ENCODE measurements at regions of chr12 and their contacts with region 1.

Region 1: GRCh38 chr12:107884769-107885694 is 110.5 kb downstream of the ASCL4 start:
- DNase-seq: peak; percentile 66
- H3K4me3 ChIP-seq: no peak overlapping the region
- H3K27ac ChIP-seq: no peak overlapping the region
- H3K4me1 ChIP-seq: no peaks in the 10 kb centered on the region
- H3K27me3 ChIP-seq: peaks cover 57% of the 10 kb centered on the region
- CTCF ChIP-seq: peak; percentile 81

Region 2: GRCh38 chr12:107545737-107546353 is 339.2 kb before region 1 on chr12:
- CTCF ChIA-PET with region 1: no interaction called
- POLR2A ChIA-PET with region 1: no interaction called
- intact Hi-C with region 1: no loop called
- DNase-seq: no peak
- H3K4me3 ChIP-seq: no peak overlapping the region
- H3K27ac ChIP-seq: no peak overlapping the region
- H3K4me1 ChIP-seq: no peaks in the 10 kb centered on the region
- H3K27me3 ChIP-seq: no peaks in the 10 kb centered on the region
- CTCF ChIP-seq: no peak

Region 3: GRCh38 chr12:107677671-107678070 is 207.4 kb before region 1 on chr12:
- CTCF ChIA-PET with region 1: interaction called, 10 read pairs
- POLR2A ChIA-PET with region 1: no interaction called
- intact Hi-C with region 1: loop called (anchors 2 kb)
- DNase-seq: no peak
- H3K4me3 ChIP-seq: no peak overlapping the region
- H3K27ac ChIP-seq: no peak overlapping the region
- H3K4me1 ChIP-seq: no peaks in the 10 kb centered on the region
- H3K27me3 ChIP-seq: peaks cover 5% of the 10 kb centered on the region
- CTCF ChIP-seq: no peak

Region 4: DNA sequence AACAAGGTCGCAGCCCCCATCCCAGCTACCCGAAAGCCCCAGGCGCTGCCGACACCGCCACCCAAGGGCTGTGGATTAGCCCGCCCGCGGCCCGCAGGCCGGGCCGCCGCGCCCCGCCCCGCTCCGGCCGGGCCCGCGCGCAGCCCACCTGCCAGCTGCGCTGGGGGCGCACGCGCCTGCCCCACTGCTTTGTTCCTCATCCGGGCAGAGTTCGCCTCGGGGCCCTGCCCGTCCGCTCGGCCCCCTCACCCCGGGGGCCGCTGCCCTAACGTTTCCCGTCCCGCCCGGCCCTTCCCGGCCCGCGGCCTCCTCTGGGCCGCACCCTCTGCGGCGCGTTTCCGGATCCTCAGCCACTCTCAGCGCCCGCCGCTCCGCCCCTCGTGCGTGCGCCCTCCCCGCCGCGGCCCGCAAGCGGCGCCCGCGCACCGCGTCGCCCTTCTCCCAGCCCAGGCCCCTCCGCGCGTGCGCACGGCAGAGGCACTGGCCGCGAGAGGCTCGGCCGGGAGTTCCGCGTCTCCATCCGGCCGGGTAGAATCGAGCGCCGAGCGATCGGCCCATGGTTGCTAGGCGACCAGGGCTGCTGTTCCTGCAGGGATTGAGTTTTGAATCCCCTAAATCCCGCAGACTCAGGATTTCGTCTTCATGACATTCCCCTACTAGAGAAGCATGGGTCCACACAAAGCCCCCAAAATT is 124.1 kb before region 1 on chr12 and contains the start of gene PRDM4:
- CTCF ChIA-PET with region 1: no interaction called
- POLR2A ChIA-PET with region 1: no interaction called
- intact Hi-C with region 1: loop called (anchors 2 kb)
- DNase-seq: peak; percentile 98
- H3K4me3 ChIP-seq: peak within 1 kb of the TSS; percentile 95
- H3K27ac ChIP-seq: peak within 1 kb of the TSS; percentile 56
- H3K4me1 ChIP-seq: peaks cover 16% of the 10 kb centered on the region
- H3K27me3 ChIP-seq: no peaks in the 10 kb centered on the region
- CTCF ChIP-seq: no peak; the same call in 1 of the 2 replicates
- total RNA-seq, gene PRDM4: 27.9 and 31.5 TPM in 2 replicates

Region 5: DNA sequence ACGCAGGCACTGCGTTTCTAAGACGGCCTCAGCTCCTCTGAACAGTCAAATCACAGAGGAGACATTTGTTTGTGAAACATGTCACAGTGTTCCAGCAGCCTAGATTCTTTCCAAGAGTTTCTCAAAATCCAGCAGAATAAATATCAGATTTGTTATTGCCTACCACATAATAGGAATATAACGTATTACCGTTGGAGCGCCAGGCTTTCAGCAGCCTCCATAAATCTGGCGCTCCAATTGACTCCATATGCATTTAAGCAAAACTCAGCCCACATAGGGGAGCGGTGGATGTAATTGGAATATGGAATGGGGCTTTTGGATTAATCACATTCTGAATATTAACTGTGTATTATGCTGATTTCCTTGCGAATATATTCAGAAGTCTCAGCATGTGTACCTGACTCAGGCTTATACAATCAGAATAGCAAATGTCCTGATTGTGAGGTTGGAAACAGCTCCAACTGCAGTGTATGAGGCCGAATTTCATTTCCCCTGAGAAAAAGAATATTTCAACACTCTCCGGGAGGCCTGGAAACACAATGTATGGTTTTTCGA is 63.4 kb after region 1 on chr12:
- CTCF ChIA-PET with region 1: no interaction called
- POLR2A ChIA-PET with region 1: no interaction called
- intact Hi-C with region 1: no loop called
- DNase-seq: no peak
- H3K4me3 ChIP-seq: no peak overlapping the region
- H3K27ac ChIP-seq: no peak overlapping the region
- H3K4me1 ChIP-seq: no peaks in the 10 kb centered on the region
- H3K27me3 ChIP-seq: peaks cover 43% of the 10 kb centered on the region
- CTCF ChIP-seq: no peak

Region 6: GRCh38 chr12:108004319-108004718 is 119.3 kb after region 1 on chr12:
- CTCF ChIA-PET with region 1: no interaction called
- POLR2A ChIA-PET with region 1: no interaction called
- intact Hi-C with region 1: no loop called
- DNase-seq: peak; percentile 3
- H3K4me3 ChIP-seq: no peak overlapping the region
- H3K27ac ChIP-seq: no peak overlapping the region
- H3K4me1 ChIP-seq: no peaks in the 10 kb centered on the region
- H3K27me3 ChIP-seq: peaks cover 23% of the 10 kb centered on the region
- CTCF ChIP-seq: no peak